ENCODE measurements at regions of chr17 and their contacts with region 1.

Region 1: GRCh38 chr17:9522074-9522473 is 53.5 kb downstream of the STX8 start:
- DNase-seq: peak; percentile 54
- ATAC-seq: peak; percentile 64
- H3K4me3 ChIP-seq: no peak overlapping the region
- H3K27ac ChIP-seq: no peak overlapping the region
- H3K4me1 ChIP-seq: no peaks in the 10 kb centered on the region
- H3K27me3 ChIP-seq: no peaks in the 10 kb centered on the region
- CTCF ChIP-seq: peak; percentile 62; the same call in 1 of the 2 replicates

Region 2: GRCh38 chr17:8991514-8992285 is 530.4 kb before region 1 on chr17:
- CTCF ChIA-PET with region 1: no interaction called
- POLR2A ChIA-PET with region 1: no interaction called
- intact Hi-C with region 1: loop called (anchors 2 kb)
- DNase-seq: peak; percentile 63
- ATAC-seq: peak; percentile 38; the same call in 1 of the 2 replicates
- H3K4me3 ChIP-seq: no peak overlapping the region
- H3K27ac ChIP-seq: no peak overlapping the region
- H3K4me1 ChIP-seq: no peaks in the 10 kb centered on the region
- H3K27me3 ChIP-seq: no peaks in the 10 kb centered on the region
- CTCF ChIP-seq: peak; percentile 72

Region 3: GRCh38 chr17:9402590-9403199 is 119.4 kb before region 1 on chr17:
- CTCF ChIA-PET with region 1: no interaction called
- POLR2A ChIA-PET with region 1: no interaction called
- intact Hi-C with region 1: loop called (anchors 2 kb)
- DNase-seq: peak; percentile 55
- ATAC-seq: peak; percentile 49
- H3K4me3 ChIP-seq: no peak overlapping the region
- H3K27ac ChIP-seq: no peak overlapping the region
- H3K4me1 ChIP-seq: no peaks in the 10 kb centered on the region
- H3K27me3 ChIP-seq: no peaks in the 10 kb centered on the region
- CTCF ChIP-seq: peak; percentile 66

Measured in PC-3 (cell line).